Activated naive CD4-positive, alpha-beta T cell treated with anti-CD3 and anti-CD28 coated beads for 36 hours (primary cell): ENCODE measurements at regions of chr3 and their contacts with region 1.

Region 1: DNA sequence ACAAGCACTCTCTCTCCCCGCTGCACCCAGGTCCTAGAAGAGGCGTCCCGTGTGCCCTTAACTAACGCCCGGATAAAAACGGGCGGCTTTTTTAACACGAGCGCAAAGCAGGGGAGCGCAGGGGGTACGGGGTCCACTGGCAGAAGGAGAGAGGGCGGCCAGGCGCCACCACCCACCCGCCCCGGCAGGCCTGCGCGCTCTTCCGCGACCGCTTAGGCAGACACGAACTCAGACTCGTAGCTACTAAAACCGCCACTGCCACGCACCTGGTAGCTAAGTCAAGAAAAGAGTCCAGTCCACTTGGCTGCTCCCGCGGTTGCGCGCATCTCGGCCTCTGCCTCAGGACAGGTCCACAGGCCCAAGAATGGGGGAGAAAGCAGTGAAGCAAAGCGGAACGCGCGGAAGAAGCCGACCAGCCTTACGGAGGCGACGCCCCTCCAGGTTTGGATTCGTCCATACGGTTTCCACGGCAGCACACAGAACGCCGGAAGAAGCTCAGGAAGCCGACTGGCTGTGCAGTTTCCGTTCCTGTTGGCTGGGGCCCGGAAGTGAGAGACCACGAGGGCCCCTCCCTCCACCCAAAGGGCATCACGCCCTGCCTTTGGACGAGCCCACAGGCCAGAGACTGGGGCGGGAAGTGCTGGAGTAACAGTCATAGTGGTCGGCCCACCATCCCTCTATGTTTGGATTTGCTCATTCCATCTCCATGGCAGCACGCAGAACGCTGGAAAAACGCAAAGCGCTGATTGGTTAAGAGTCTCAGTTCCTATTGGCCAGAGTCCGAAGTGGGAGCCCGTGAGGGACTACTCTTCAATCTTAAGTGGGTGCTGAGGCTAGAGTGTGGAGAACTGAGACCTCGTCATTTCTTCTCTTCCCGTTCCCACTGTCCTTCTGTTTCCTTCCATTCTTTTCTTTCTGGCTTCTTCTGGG is at the start of gene ULK4:
- DNase-seq: peak; percentile 97
- H3K4me3 Mint-ChIP-seq: peak within 1 kb of the TSS; percentile 99
- H3K27ac Mint-ChIP-seq: peak within 1 kb of the TSS; percentile 87
- H3K4me1 Mint-ChIP-seq: peaks cover 13% of the 10 kb centered on the region
- H3K27me3 Mint-ChIP-seq: no peaks in the 10 kb centered on the region
- total RNA-seq, gene ULK4: 8.5 to 9.1 TPM

Region 2: DNA sequence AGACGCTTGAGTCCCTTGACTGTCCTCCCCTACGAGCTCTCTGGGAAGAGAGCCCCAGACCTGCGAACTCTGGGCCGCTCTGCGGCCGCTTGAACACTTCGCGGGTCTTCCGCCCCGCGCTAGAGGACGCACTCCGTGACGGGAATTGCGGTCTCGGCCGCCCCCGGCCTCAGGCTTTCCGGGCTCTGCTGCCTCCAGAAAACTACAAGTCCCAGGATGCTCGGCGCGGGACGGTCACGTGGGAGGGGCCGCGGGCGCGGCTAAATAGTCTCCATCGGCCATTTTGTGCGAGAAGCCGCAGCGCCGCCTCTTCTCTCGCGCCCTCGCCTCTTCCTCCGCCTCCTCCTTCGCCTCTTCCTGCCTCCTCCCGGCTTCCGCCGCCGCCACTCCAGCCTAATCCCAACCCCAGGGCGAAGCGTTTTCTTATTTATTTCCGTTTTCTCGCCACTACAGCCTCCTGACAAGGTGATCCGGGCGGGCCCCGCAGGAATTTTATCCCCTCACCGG is 1652.5 kb before region 1 on chr3 and contains the start of gene EIF1B:
- CTCF ChIA-PET with region 1: no interaction called
- intact Hi-C with region 1: loop called (anchors 1 kb)
- DNase-seq: peak; percentile 99
- H3K4me3 Mint-ChIP-seq: peak within 1 kb of the TSS; percentile 99
- H3K27ac Mint-ChIP-seq: peak within 1 kb of the TSS; percentile 98
- H3K4me1 Mint-ChIP-seq: peaks cover 24% of the 10 kb centered on the region
- H3K27me3 Mint-ChIP-seq: no peaks in the 10 kb centered on the region
- total RNA-seq, gene EIF1B: 47.0 to 49.2 TPM

Region 3: DNA sequence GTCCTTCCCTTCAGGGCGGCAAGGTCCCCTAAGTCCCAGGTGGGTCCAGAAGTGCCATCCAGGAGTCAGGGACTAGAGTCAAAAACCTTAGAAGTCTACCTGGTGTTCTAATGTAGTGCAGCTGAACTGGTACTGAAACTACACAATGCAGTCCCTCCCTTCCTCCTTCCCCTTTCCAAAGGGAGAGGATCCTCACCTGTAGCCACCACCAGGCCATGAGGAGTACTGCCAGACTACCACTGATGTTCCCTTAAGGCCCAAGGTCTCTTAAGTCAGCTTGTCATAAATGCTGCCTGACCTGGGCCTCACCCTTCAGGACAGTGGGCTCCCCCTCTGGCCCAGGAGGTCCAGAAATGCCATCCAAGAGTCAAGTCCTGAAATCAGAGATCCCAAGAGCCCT is 99.0 kb before region 1 on chr3:
- CTCF ChIA-PET with region 1: no interaction called
- intact Hi-C with region 1: no loop called
- DNase-seq: no peak
- H3K4me3 Mint-ChIP-seq: no peak overlapping the region
- H3K27ac Mint-ChIP-seq: no peak overlapping the region
- H3K4me1 Mint-ChIP-seq: no peaks in the 10 kb centered on the region
- H3K27me3 Mint-ChIP-seq: no peaks in the 10 kb centered on the region

Region 4: DNA sequence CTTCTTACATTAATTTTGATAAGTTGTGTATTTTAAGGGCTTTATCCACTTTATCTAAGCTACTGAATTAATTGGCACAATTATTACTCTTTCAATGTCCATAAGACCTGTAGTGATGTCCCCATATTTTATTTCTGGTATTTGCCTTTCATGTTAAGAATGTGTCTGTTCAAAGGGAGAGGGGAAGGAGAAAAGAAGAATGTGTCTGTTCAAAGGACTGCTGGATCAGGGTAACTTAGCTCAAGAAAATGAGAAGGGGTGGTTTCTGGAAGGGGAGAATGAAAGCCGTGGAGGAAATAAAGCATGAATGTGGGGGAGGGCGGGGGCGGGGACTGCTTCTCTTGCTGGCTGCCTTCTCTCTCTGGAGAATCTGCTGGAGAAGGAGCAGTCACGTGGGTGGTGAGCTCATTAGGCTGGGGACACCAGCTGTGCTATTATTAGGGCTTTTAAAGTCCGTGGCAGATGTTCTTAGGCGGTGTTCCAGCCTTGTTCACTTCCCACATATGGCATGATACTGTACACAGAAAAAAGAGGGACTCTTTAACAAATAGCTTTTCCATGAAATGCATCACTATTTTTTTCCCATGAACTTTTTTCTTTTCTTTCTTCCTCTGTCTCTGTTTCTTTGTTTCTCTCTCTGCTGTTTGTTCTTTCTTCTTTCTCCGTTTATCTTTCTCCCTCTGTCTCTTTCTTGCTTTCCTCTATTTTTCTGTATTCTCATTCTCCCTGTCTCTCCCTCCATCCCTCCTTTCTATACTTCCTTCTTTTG is 63.5 kb after region 1 on chr3:
- CTCF ChIA-PET with region 1: no interaction called
- intact Hi-C with region 1: no loop called
- DNase-seq: peak; percentile 27
- H3K4me3 Mint-ChIP-seq: peak overlapping the region; percentile 14
- H3K27ac Mint-ChIP-seq: no peak overlapping the region
- H3K4me1 Mint-ChIP-seq: peaks cover 51% of the 10 kb centered on the region
- H3K27me3 Mint-ChIP-seq: no peaks in the 10 kb centered on the region

Region 5: GRCh38 chr3:42090973-42091731 is 129.1 kb after region 1 on chr3 and contains the start of gene TRAK1:
- CTCF ChIA-PET with region 1: no interaction called
- intact Hi-C with region 1: loop called (anchors 1 kb)
- DNase-seq: no peak
- H3K4me3 Mint-ChIP-seq: no peak within 1 kb of the TSS
- H3K27ac Mint-ChIP-seq: no peak within 1 kb of the TSS
- H3K4me1 Mint-ChIP-seq: peaks cover 51% of the 10 kb centered on the region
- H3K27me3 Mint-ChIP-seq: no peaks in the 10 kb centered on the region
- total RNA-seq, gene TRAK1: 18.3 to 19.1 TPM

Region 6: DNA sequence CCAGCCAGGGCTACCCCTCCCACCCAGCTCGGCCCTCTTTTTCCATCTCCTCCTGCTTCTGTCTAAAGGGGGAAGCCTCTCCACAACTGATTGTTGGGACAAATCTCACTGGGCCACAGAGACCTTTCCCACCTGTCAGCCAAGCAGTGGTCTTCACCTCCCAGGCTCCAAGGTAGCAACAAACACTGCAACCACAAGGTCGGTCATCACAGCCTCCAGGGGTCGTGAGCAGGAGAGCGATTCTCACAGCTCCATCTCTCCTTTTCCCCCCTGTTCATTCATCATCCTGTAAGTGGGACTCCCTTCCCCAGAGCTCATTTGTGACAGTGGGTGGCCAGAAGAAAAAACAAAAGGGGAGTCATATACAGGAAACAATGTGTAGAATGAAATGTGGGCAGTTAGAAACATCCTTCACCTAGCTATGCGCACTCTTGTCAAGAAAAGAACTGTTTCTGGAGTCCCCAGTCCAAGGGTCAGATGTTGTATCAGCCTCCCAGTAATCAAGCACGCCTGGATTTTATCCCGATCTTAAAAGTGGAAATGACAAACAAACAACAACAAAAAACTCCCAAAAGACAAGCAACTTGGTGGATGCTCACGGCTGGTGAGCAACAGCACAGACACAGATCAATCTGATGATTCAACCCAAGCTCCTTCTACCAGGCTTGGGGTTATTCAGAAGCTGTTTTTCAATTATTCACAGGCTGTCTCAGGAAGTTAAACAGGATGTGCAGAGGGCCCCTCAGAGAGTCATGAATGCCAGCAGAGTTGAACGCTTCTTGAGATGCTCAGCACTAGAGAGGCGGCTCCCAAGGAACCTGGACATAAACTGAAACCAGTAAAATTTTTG is 426.0 kb after region 1 on chr3:
- CTCF ChIA-PET with region 1: no interaction called
- intact Hi-C with region 1: loop called (anchors 1 kb)
- DNase-seq: peak; percentile 75
- H3K4me3 Mint-ChIP-seq: peak overlapping the region; percentile 44
- H3K27ac Mint-ChIP-seq: peak overlapping the region; percentile 96
- H3K4me1 Mint-ChIP-seq: peaks cover 25% of the 10 kb centered on the region
- H3K27me3 Mint-ChIP-seq: no peaks in the 10 kb centered on the region

Region 7: DNA sequence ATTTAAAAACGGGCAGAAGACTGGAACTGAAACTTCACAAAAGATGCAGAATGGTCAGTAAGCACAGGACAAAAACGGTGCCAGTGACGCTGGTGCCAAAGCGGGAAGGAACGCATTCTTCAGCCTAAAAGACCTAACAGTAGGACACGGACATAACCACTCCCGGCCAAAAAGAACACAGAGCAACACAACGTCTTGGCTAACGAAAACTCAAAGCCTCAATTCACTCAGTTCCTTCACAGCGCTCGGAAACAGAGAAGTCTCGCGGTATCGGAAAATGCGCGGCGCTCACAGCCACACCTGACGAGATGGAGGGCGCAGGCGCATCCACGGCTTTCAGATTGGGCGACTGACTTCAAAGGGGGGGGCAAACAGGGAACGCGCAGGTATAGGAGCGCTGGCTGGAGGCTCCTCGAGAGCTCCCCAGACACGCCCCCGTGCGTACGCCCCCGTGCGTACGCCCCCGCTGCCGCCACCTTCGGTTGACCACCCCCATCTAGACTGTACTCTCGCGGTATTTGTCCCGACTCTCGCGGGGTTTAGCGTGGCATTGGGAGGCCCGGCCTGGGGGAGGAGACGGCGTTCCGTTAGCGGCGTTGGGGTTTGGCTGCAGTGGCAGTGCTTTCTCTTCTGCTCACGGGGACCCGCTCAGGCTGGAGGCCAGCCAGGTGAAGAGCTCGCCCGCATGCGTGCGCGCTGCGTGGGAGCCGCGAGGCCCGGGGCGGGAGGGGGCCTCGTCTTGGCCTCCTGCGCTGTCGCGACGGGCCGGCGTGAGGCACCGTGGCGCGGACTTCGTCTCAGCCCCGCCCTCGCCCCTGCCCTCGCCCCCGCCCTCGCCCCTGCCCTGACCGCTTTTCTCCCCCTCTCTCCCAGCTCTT is 638.3 kb after region 1 on chr3 and contains the start of gene NKTR:
- CTCF ChIA-PET with region 1: no interaction called
- intact Hi-C with region 1: loop called (anchors 5 kb)
- DNase-seq: peak; percentile 99
- H3K4me3 Mint-ChIP-seq: peak within 1 kb of the TSS; percentile 96
- H3K27ac Mint-ChIP-seq: peak within 1 kb of the TSS; percentile 99
- H3K4me1 Mint-ChIP-seq: peaks cover 27% of the 10 kb centered on the region
- H3K27me3 Mint-ChIP-seq: no peaks in the 10 kb centered on the region
- total RNA-seq, gene NKTR: 62.1 to 65.9 TPM

Region 8: DNA sequence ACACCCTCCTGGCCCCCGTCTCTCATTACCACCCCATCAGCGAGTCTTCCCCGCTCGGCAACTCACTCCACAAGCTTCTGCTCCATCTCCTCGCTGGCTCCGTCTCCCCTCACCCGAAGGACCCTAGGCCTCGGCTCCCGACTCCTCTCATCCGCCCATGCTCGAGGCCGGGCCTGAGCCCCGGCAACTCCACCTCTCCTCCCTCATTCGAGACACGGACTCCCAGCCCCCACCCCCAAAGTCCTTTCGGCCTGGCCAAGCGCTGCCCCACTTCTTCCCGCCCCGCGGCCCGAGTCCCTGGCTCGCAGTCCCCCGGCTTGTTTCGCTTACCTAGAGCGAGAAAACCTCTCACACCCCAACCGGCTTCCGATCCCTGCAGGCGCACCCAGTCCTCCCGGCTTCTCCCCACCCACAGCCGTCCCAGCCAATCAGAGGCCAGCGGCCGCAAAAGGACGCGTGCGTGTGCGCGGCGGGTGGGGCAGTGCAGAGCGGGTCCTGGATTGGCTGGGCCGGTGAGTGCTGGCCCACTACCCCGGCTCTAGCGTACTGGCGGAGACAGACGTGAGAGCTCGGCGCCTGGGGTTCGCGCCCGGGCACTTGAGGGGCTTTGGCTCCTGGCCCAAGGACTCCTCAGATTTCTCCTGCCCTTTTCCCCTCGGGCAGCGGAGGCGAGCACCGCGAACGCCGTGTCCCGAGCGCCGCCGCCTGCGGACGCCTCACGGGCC is 842.3 kb after region 1 on chr3 and contains the start of gene HIGD1A:
- CTCF ChIA-PET with region 1: no interaction called
- intact Hi-C with region 1: loop called (anchors 1 kb)
- DNase-seq: peak; percentile 95
- H3K4me3 Mint-ChIP-seq: peak within 1 kb of the TSS; percentile 96
- H3K27ac Mint-ChIP-seq: peak within 1 kb of the TSS; percentile 86
- H3K4me1 Mint-ChIP-seq: peaks cover 42% of the 10 kb centered on the region
- H3K27me3 Mint-ChIP-seq: peaks cover 11% of the 10 kb centered on the region
- total RNA-seq, gene HIGD1A: 57.1 to 66.4 TPM